Activated T-helper 1 cell treated with anti-CD3 and anti-CD28 coated beads, Interleukin-12 subunit alpha, Interleukin-12 subunit beta, Interleukin-2, Interleukin-4 antibody, amounts not matched to agents 30 ng/mL and 10 ng/mL and 1 ng/mL, durations not matched to agents 14 hours and 24 hours and 36 hours (primary cell): ENCODE measurements at regions of chr1 and their contacts with region 1.

Region 1: DNA sequence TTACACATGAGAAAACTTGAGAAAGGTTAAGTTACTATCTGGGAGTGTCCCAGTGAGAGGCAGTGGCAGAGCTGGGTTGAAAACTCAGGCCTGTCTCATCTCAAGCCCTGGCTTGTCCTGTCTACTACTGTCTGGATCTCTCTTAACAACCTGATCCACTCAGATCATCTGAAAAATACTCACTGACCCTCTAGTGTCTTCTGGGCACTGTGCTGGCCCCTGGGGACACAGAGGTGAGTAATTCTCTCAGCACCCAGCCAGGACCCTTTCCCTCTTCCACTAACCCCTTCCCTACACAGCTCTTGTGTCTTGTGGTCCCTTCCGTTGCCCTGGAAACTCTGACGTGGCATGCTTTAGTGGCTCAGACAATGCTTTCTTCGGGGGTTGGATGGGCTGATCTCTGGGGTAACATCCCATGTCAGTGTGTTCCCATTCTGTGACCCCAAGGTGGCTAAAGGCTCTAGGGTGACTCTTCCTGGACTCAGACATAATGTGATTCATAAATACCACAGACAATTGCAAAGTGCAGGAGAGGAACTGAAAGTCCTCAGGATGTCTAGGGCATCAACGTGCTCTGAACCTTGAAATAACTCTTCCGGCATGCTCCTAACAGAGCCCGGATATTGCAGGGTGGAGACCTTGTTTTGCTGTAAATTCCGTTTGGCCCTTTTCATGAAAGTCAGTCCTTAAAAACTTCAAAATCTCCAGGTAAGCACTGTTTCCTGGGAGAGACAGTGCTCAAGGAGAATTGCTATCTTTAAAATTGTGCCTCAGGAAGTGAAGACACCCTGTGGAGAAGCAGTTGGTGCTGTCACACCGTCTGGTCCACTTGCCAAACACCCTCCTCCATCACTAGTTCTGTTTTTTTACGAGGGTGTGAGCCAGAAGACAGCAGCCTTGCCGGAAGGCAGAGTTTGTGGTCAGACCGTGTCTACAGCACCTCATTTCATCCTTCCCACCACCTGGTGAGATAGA is 4.0 kb downstream of the SHISAL2A start:
- DNase-seq: peak; percentile 78
- H3K4me3 Mint-ChIP-seq: peak overlapping the region; percentile 77
- H3K27ac Mint-ChIP-seq: peak overlapping the region; percentile 99
- H3K4me1 Mint-ChIP-seq: peaks cover 68% of the 10 kb centered on the region
- H3K27me3 Mint-ChIP-seq: peaks cover 2% of the 10 kb centered on the region

Region 2: GRCh38 chr1:52520148-52520547 is 116.9 kb before region 1 on chr1:
- intact Hi-C with region 1: loop called (anchors 10 kb)
- DNase-seq: no peak
- H3K4me3 Mint-ChIP-seq: no peak overlapping the region
- H3K27ac Mint-ChIP-seq: peak overlapping the region; percentile 73
- H3K4me1 Mint-ChIP-seq: peaks cover 26% of the 10 kb centered on the region
- H3K27me3 Mint-ChIP-seq: no peaks in the 10 kb centered on the region

Region 3: DNA sequence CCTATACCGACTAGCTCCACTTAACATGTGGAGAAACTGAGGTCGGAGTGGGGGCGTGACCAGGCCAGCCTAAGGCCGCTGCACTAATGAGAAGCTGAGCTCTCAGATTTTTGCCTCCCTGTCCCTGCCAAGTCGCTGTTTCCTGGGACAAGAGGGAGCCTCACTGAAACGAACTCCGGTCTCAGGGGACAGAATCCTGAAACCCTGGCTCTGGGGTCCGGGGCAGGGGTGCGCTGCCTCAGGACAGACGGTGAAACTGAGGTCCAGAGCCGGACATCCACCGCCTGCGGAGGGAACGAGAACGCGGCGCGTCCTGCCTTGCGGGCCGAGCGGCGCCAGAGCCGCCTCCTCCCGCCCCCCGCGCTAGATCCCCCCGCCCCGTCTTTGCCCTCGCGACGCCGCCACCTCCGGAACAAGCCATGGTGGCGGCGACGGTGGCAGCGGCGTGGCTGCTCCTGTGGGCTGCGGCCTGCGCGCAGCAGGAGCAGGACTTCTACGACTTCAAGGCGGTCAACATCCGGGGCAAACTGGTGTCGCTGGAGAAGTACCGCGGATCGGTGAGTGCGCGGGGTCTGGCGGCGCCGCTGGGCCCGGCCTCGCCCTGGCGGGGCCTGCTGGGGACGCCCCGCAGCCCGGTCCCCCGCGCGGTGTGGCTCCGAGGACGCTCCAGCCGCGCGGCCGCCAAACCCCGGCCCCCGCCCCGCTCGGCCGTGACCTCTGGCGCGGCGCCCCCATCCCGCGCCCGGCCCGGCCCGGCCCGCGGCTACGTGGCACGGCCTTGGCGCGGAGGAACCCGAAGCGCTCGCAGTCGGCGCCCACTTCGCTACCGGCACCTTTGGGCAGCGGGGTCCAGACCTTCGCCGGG is 34.8 kb before region 1 on chr1 and contains the start of gene GPX7:
- intact Hi-C with region 1: loop called (anchors 1 kb)
- DNase-seq: peak; percentile 54
- H3K4me3 Mint-ChIP-seq: peak within 1 kb of the TSS; percentile 87
- H3K27ac Mint-ChIP-seq: peak within 1 kb of the TSS; percentile 86
- H3K4me1 Mint-ChIP-seq: peaks cover 49% of the 10 kb centered on the region
- H3K27me3 Mint-ChIP-seq: no peaks in the 10 kb centered on the region
- total RNA-seq, gene GPX7: 32.7 and 32.8 TPM in 2 replicates

Region 4: GRCh38 chr1:52659356-52659755 is 22.3 kb after region 1 on chr1:
- intact Hi-C with region 1: loop called (anchors 1 kb)
- DNase-seq: peak; percentile 20
- H3K4me3 Mint-ChIP-seq: peak overlapping the region; percentile 29
- H3K27ac Mint-ChIP-seq: peak overlapping the region; percentile 90
- H3K4me1 Mint-ChIP-seq: peaks cover 31% of the 10 kb centered on the region
- H3K27me3 Mint-ChIP-seq: no peaks in the 10 kb centered on the region

Region 5: DNA sequence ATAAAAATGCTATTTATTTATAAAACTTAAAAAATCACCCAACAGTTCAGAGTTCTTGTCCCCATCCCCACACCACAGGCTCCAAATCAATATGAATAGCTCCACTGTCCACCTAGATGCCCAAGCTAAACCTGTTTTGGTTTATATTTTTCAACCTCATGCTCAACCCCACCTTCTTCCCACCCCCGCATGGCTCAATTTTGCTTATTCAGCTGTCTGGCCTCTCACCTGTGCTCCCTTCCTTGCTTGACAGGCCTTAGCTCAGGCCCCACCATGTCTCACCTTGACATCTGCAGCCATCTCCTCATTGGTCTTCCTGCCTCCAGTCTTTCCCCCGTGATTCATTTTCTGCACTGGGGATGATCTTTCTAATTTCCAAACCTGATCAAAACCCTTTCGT is 43.3 kb after region 1 on chr1:
- intact Hi-C with region 1: no loop called
- DNase-seq: no peak
- H3K4me3 Mint-ChIP-seq: no peak overlapping the region
- H3K27ac Mint-ChIP-seq: no peak overlapping the region
- H3K4me1 Mint-ChIP-seq: peaks cover 13% of the 10 kb centered on the region
- H3K27me3 Mint-ChIP-seq: no peaks in the 10 kb centered on the region